HCT116 (cell line): ENCODE measurements at regions of chr14 and their contacts with region 1.

Region 1: GRCh38 chr14:95527387-95528002 is 7.4 kb upstream of the GLRX5 start:
- DNase-seq: no peak
- ATAC-seq: peak; percentile 71
- H3K4me3 ChIP-seq: no peak overlapping the region
- H3K27ac ChIP-seq: no peak overlapping the region
- H3K4me1 ChIP-seq: peaks cover 34 to 76% of the 10 kb centered on the region in 2 experiments
- H3K27me3 ChIP-seq: no peaks in the 10 kb centered on the region
- CTCF ChIP-seq: peak; percentile 72 to 91 (median 88)
- POLR2A ChIP-seq: no peak
- RAD21 ChIP-seq: peak; percentile 84

Region 2: DNA sequence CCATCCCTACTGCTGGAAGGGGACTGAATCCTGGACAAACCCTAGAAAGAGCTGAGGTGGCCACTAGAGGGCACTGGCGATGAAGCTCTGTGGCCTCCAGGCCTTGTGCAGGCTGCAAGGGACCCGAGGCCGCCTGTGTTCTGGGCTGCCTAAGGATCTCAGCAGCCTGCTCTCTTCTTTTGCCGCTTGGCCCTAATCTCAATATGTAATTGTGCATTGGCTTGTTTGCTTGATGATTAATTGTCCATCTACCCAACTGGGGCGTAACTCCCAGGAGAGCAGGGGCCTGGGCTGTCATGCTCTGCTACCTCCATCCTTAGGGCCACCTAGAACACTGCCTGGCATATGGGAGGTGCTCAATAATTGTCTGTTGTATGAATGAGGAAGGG is 84.9 kb before region 1 on chr14:
- CTCF ChIA-PET with region 1: interaction called, 32 read pairs
- POLR2A ChIA-PET with region 1: no interaction called
- RAD21 ChIA-PET with region 1: interaction called, 4 to 6 read pairs
- intact Hi-C with region 1: loop called (anchors 1 kb)
- DNase-seq: peak; percentile 49
- ATAC-seq: peak; percentile 99
- H3K4me3 ChIP-seq: no peak overlapping the region
- H3K27ac ChIP-seq: no peak overlapping the region
- H3K4me1 ChIP-seq: peaks cover 0 to 7% of the 10 kb centered on the region in 2 experiments; a peak in 1 of 4 replicates
- H3K27me3 ChIP-seq: no peaks in the 10 kb centered on the region
- CTCF ChIP-seq: peak; percentile 85 to 91 (median 91)
- POLR2A ChIP-seq: no peak
- RAD21 ChIP-seq: peak; percentile 94

Region 3: GRCh38 chr14:95452176-95452892 is 75.2 kb before region 1 on chr14:
- CTCF ChIA-PET with region 1: interaction called, 13 read pairs
- POLR2A ChIA-PET with region 1: no interaction called
- RAD21 ChIA-PET with region 1: no interaction called
- intact Hi-C with region 1: no loop called
- DNase-seq: no peak
- ATAC-seq: peak; percentile 91
- H3K4me3 ChIP-seq: no peak overlapping the region
- H3K27ac ChIP-seq: no peak overlapping the region
- H3K4me1 ChIP-seq: no peaks in the 10 kb centered on the region
- H3K27me3 ChIP-seq: no peaks in the 10 kb centered on the region
- CTCF ChIP-seq: peak; percentile 28 to 74 (median 55); a peak in 5 of 6 replicates
- POLR2A ChIP-seq: no peak
- RAD21 ChIP-seq: peak; percentile 41

Region 4: GRCh38 chr14:95515596-95516552 is 11.6 kb before region 1 on chr14:
- CTCF ChIA-PET with region 1: interaction called, 15 read pairs
- POLR2A ChIA-PET with region 1: no interaction called
- RAD21 ChIA-PET with region 1: no interaction called
- intact Hi-C with region 1: no loop called
- DNase-seq: no peak
- ATAC-seq: peak; percentile 90
- H3K4me3 ChIP-seq: peak overlapping the region; percentile 50 to 61
- H3K27ac ChIP-seq: no peak overlapping the region
- H3K4me1 ChIP-seq: peaks cover 22 to 44% of the 10 kb centered on the region in 2 experiments
- H3K27me3 ChIP-seq: no peaks in the 10 kb centered on the region
- CTCF ChIP-seq: peak in 2 of 3 experiments; percentile 43 to 46; a peak in 4 of 6 replicates
- POLR2A ChIP-seq: no peak
- RAD21 ChIP-seq: no peak

Region 5: DNA sequence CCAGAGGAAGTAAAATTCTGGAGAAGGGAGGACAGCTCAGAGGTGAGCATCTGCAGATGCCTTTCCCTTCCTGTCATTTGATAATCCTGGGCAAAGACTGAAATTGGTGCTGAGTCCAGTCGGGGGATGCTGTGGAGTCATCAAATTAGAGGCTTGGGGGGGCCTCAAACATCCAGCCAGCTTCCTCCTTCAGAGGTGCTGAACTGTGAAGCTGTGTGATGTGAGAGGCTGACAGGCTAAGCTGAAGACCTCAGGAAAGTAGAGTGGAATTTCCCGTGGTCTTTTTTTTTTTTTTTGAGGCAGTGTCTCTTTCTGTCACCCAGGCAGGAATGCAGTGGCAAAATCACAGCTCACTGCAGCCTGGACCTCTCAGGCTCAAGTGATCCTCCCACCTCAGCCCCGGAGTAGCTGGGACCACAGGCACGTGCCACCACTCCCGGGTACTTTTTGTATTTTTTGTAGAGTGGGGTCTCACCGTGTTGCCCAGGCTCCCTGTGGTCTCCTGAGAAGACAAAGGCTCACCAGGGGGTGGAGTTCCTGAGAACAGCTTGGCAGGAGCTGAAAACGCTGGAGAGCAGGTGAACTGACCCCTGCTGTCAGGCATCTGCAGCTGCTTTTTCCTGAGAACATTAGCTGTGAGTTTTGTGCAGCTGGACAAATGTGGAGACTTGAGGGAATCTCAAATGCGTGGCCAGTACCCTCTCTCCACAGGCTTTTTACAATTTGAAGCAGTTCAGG is 152.7 kb after region 1 on chr14:
- CTCF ChIA-PET with region 1: no interaction called
- POLR2A ChIA-PET with region 1: no interaction called
- RAD21 ChIA-PET with region 1: no interaction called
- intact Hi-C with region 1: no loop called
- DNase-seq: peak; percentile 13
- ATAC-seq: peak; percentile 50
- H3K4me3 ChIP-seq: no peak overlapping the region
- H3K27ac ChIP-seq: no peak overlapping the region
- H3K4me1 ChIP-seq: no peaks in the 10 kb centered on the region
- H3K27me3 ChIP-seq: peaks cover 28% of the 10 kb centered on the region
- CTCF ChIP-seq: peak; percentile 34 to 52 (median 50); a peak in 4 of 6 replicates
- POLR2A ChIP-seq: no peak
- RAD21 ChIP-seq: peak; percentile 10; the same call in 1 of the 2 replicates